H1 (cell line): ENCODE measurements at regions of chr3 and their contacts with region 1.

Region 1: DNA sequence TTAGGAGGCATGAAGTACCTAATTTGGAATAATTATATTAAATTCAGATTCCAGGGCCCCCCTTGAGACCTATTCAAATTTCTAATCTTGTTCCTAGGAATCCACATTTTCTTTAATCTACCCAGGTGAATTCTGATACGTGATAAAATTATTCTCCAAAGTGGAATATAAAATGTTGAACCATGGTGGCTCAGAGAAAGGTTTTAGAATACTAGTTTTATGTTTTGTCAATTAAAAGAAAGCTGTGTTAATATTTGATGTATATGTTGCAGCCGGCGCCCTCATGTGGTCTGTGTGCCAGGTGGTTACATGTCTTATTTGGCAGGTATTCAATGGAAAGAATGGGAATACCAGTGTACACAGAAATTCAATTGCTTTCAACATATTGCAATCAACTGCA is 321.8 kb downstream of the FEZF2 start:
- DNase-seq: no peak
- H3K4me3 ChIP-seq: no peak overlapping the region
- H3K27ac ChIP-seq: no peak overlapping the region
- H3K4me1 ChIP-seq: peaks cover 0 to 6% (median 3%) of the 10 kb centered on the region in 4 experiments; a peak in 2 of 7 replicates
- H3K27me3 ChIP-seq: no peaks in the 10 kb centered on the region
- CTCF ChIP-seq: peak; percentile 24 to 52 (median 36); a peak in 3 of 4 replicates
- EP300 ChIP-seq: no peak
- POLR2A ChIP-seq: no peak
- RAD21 ChIP-seq: peak; percentile 45 to 50

Region 2: GRCh38 chr3:62007036-62007818 is 44.3 kb before region 1 on chr3:
- CTCF ChIA-PET with region 1: interaction called, 14 read pairs
- POLR2A ChIA-PET with region 1: no interaction called
- DNase-seq: no peak
- H3K4me3 ChIP-seq: no peak overlapping the region
- H3K27ac ChIP-seq: no peak overlapping the region
- H3K4me1 ChIP-seq: no peaks in the 10 kb centered on the region
- H3K27me3 ChIP-seq: no peaks in the 10 kb centered on the region
- CTCF ChIP-seq: no peak
- EP300 ChIP-seq: no peak
- POLR2A ChIP-seq: no peak
- RAD21 ChIP-seq: no peak

Region 3: DNA sequence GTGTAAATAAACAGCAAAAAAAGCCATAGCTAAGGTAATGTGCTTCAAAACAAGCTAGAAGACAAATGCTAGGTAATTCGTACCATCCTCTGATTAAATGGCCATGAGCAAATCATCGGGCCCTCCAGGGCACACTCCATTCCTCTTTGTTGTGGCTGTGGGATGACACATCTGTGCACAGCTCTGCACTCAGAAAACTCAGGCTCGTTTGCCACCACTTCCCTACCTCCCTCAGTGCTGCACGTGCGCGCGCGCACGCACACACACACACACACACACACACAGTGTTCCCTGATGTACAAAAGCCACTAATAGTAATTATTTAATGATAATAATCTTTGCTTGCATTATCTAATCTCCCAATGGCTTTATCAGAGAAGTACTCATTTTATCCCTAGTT is 14.8 kb before region 1 on chr3:
- CTCF ChIA-PET with region 1: interaction called, 16 read pairs
- POLR2A ChIA-PET with region 1: interaction called, 3 read pairs
- DNase-seq: no peak
- H3K4me3 ChIP-seq: no peak overlapping the region
- H3K27ac ChIP-seq: no peak overlapping the region
- H3K4me1 ChIP-seq: peaks cover 0 to 2% (median 0%) of the 10 kb centered on the region in 4 experiments; a peak in 1 of 7 replicates
- H3K27me3 ChIP-seq: no peaks in the 10 kb centered on the region
- CTCF ChIP-seq: no peak
- EP300 ChIP-seq: no peak
- POLR2A ChIP-seq: no peak
- RAD21 ChIP-seq: no peak

Region 4: DNA sequence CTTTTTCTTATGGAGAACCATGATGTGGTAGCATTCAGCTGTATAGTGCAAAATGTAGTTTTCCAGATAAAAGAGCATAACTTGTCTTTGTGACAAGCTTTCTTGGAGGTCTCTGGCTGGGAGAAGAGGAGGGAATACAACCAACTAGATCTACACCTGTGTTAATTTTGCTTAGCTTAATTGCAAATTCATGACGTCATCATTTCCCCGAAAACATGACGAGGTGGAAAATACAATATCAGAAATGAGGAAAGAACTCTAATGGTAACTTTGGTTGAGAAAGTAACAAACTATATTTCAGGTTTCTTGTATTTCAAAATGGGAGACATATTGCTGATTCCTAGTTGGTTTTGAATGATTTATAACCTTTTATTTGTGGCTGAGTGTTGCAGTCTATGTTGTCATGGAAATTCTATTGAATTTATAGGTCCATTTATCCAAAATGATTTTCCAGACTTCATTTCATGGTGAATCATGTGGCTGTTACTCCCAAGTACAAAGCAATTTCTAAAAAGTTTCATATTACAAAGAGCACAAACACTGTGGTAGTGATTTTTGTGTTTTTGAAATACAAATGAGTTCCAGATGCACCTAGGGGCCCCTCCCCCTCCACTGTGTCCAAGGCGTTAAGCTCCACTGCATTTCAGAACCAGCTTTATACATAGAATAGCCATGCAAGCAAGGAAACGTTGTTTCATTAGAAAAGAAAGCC is 14.6 kb after region 1 on chr3:
- CTCF ChIA-PET with region 1: interaction called, 24 read pairs
- POLR2A ChIA-PET with region 1: no interaction called
- DNase-seq: no peak
- H3K4me3 ChIP-seq: no peak overlapping the region
- H3K27ac ChIP-seq: no peak overlapping the region
- H3K4me1 ChIP-seq: no peaks in the 10 kb centered on the region
- H3K27me3 ChIP-seq: no peaks in the 10 kb centered on the region
- CTCF ChIP-seq: no peak
- EP300 ChIP-seq: no peak
- POLR2A ChIP-seq: no peak
- RAD21 ChIP-seq: no peak

Region 5: GRCh38 chr3:62100282-62100989 is 48.9 kb after region 1 on chr3:
- CTCF ChIA-PET with region 1: no interaction called
- POLR2A ChIA-PET with region 1: no interaction called
- DNase-seq: no peak
- H3K4me3 ChIP-seq: no peak overlapping the region
- H3K27ac ChIP-seq: no peak overlapping the region
- H3K4me1 ChIP-seq: no peaks in the 10 kb centered on the region
- H3K27me3 ChIP-seq: no peaks in the 10 kb centered on the region
- CTCF ChIP-seq: no peak
- EP300 ChIP-seq: no peak
- POLR2A ChIP-seq: no peak
- RAD21 ChIP-seq: no peak